Cardiac septum (tissue), 1 donor: ENCODE measurements at regions of chr17 and their contacts with region 1.

Region 1: DNA sequence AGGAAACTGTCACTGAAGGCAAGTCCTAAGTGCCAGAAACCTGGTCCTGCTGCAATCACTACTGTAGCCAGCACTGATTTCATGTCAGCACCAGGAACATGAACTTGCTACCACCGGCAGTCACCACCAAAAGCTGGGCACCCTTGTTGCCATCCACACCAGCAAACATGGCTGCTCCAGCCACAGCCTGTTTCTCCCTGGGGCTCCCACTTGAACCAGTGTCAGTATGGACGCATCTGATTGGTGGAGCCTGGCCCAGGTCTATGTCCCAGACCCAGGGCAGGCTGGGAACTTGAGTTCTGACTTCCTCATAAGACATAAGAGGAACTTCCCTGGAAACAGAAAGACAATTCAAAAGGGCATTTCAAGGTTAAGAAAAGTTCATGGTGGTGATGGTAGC is 56.5 kb downstream of the COPRS start:
- DNase-seq: no peak

Region 2: GRCh38 chr17:31654936-31655335 is 147.6 kb before region 1 on chr17:
- intact Hi-C with region 1: no loop called
- DNase-seq: no peak

Region 3: DNA sequence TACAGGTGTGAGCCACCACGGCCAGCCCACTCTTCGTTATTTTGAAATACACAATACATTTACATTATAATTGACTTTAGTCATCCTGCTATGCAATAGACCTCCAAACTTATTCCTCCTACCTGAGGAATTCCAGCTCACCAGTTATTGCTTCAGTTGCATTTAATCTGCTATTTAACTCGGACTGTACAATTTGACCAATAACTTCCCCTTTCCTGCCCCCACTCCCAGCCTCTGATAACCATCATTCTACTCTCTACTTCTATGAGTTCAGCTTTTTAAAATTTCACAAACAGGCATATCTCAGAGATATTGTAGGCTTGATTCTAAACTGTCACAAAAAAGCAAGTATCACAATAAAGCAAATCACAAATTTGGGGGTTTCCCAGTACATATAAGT is 100.5 kb before region 1 on chr17:
- intact Hi-C with region 1: no loop called
- DNase-seq: no peak

Region 4: GRCh38 chr17:31745964-31746600 is 56.4 kb before region 1 on chr17:
- intact Hi-C with region 1: loop called (anchors 5 kb)
- DNase-seq: no peak

Region 5: DNA sequence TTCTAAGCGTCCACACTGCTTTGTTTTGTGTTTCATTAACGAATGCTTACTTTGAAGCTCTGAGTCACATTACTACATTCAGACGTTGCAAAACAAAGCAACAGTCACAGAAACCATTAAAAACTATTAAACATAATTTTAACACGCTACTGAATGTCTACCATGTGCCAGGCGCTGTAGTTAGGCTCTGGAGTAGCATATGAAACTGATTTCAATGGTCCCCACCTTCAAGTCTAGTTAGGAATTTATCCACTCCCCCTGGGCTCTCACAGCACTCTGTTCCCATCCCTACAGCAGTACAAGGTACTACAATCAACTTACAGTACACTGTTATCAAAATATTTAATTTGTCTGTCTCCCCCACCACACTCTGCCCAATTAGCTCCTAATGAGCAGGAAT is 98.4 kb after region 1 on chr17:
- intact Hi-C with region 1: no loop called
- DNase-seq: no peak